Activated CD4-positive, alpha-beta memory T cell treated with anti-CD3 and anti-CD28 coated beads for 36 hours (primary cell): ENCODE measurements at regions of chr9 and their contacts with region 1.

Region 1: GRCh38 chr9:5764130-5764868 is 68.6 kb downstream of the ERMP1 start:
- DNase-seq: peak; percentile 24
- H3K4me3 Mint-ChIP-seq: no peak overlapping the region
- H3K27ac Mint-ChIP-seq: peak overlapping the region; percentile 31
- H3K4me1 Mint-ChIP-seq: peaks cover 58% of the 10 kb centered on the region
- H3K27me3 Mint-ChIP-seq: no peaks in the 10 kb centered on the region

Region 2: DNA sequence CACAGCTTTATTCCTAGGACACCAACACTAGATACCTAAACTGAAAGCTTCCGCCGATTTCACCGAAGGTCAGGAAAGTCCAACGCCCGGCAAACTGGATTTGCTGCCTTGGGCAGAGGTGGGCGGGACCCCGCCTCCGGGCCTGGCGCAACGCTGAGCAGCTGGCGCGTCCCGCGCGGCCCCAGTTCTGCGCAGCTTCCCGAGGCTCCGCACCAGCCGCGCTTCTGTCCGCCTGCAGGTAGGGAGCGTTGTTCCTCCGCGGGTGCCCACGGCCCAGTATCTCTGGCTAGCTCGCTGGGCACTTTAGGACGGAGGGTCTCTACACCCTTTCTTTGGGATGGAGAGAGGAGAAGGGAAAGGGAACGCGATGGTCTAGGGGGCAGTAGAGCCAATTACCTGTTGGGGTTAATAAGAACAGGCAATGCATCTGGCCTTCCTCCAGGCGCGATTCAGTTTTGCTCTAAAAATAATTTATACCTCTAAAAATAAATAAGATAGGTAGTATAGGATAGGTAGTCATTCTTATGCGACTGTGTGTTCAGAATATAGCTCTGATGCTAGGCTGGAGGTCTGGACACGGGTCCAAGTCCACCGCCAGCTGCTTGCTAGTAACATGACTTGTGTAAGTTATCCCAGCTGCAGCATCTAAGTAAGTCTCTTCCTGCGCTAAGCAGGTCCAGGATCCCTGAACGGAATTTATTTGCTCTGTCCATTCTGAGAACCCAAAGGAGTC is 313.8 kb before region 1 on chr9 and contains the start of gene CD274:
- CTCF ChIA-PET with region 1: no interaction called
- POLR2A ChIA-PET with region 1: no interaction called
- intact Hi-C with region 1: loop called (anchors 5 kb)
- DNase-seq: peak; percentile 92
- H3K4me3 Mint-ChIP-seq: peak within 1 kb of the TSS; percentile 86
- H3K27ac Mint-ChIP-seq: peak within 1 kb of the TSS; percentile 90
- H3K4me1 Mint-ChIP-seq: peaks cover 59% of the 10 kb centered on the region
- H3K27me3 Mint-ChIP-seq: no peaks in the 10 kb centered on the region
- total RNA-seq, gene CD274: 28.3 to 32.4 TPM

Region 3: GRCh38 chr9:5644501-5644900 is 119.8 kb before region 1 on chr9:
- CTCF ChIA-PET with region 1: no interaction called
- POLR2A ChIA-PET with region 1: no interaction called
- intact Hi-C with region 1: loop called (anchors 1 kb)
- DNase-seq: no peak
- H3K4me3 Mint-ChIP-seq: no peak overlapping the region
- H3K27ac Mint-ChIP-seq: peak overlapping the region; percentile 10
- H3K4me1 Mint-ChIP-seq: peaks cover 36% of the 10 kb centered on the region
- H3K27me3 Mint-ChIP-seq: no peaks in the 10 kb centered on the region

Region 4: DNA sequence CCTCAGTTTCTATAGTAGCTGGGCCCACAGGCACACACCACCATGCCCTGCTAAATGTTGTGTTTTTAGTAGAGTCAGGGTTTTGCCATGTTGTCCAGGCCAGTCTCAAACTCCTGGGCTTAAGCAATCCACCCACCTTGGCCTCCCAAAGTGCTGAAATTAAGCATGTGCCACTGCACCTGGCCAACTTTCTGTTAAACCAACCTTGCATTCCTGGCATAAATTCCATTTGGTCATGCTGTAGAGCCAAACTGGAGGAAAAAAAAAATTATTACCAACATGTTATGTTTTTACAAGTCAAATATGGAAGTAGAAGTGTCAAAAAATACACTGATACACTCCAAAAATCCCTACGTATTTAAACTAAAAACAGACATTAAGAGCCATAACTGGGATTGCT is 14.5 kb after region 1 on chr9:
- CTCF ChIA-PET with region 1: no interaction called
- POLR2A ChIA-PET with region 1: no interaction called
- intact Hi-C with region 1: no loop called
- DNase-seq: no peak
- H3K4me3 Mint-ChIP-seq: no peak overlapping the region
- H3K27ac Mint-ChIP-seq: no peak overlapping the region
- H3K4me1 Mint-ChIP-seq: peaks cover 2% of the 10 kb centered on the region
- H3K27me3 Mint-ChIP-seq: no peaks in the 10 kb centered on the region

Region 5: GRCh38 chr9:5843794-5844504 is 79.7 kb after region 1 on chr9:
- CTCF ChIA-PET with region 1: no interaction called
- POLR2A ChIA-PET with region 1: no interaction called
- intact Hi-C with region 1: loop called (anchors 2 kb)
- DNase-seq: no peak
- H3K4me3 Mint-ChIP-seq: peak overlapping the region; percentile 46
- H3K27ac Mint-ChIP-seq: peak overlapping the region; percentile 82
- H3K4me1 Mint-ChIP-seq: peaks cover 63% of the 10 kb centered on the region
- H3K27me3 Mint-ChIP-seq: no peaks in the 10 kb centered on the region

Region 6: DNA sequence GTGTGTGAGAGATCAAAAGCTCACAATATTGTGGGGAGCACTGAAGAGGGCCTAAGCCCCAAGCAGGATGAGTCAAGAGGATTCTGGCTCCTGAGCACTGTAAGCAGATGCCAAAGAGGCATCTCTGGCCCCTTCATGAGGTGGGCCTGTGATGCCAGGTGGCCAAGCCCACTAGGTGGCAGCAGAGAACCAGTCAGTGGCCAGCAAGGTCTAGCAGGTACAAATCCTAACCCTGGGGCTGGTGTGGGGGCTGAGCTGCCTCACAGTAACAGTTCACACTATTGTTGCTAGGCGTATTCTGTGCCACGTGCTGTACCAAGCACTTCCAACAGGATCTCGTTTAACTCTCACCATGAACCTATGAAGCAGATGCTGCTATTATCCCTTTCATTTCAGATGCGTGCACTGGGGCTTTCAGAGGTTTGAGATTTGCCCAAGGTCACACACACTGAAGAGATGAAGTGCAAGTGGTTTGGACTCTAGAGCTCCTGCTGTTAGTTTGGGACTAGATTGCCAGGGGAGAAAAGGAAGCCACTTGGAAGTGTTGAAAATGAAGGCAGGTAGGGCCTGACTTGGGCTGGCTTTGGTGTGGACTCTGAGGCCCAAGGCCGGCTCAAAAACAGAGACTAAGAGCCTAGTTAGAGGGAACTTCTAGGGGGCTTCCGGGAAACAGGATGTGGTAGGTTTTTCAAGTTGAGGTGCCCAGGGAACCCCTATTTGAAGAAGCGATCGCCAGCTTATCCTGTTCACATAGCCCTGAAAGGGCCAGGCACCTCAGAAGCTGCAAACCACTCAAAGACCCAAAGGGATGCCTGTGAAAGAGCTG is 122.0 kb after region 1 on chr9:
- CTCF ChIA-PET with region 1: no interaction called
- POLR2A ChIA-PET with region 1: no interaction called
- intact Hi-C with region 1: no loop called
- DNase-seq: peak; percentile 89
- H3K4me3 Mint-ChIP-seq: no peak overlapping the region
- H3K27ac Mint-ChIP-seq: no peak overlapping the region
- H3K4me1 Mint-ChIP-seq: peaks cover 3% of the 10 kb centered on the region
- H3K27me3 Mint-ChIP-seq: no peaks in the 10 kb centered on the region